ENCODE measurements at regions of chr9 and their contacts with region 1.

Region 1: DNA sequence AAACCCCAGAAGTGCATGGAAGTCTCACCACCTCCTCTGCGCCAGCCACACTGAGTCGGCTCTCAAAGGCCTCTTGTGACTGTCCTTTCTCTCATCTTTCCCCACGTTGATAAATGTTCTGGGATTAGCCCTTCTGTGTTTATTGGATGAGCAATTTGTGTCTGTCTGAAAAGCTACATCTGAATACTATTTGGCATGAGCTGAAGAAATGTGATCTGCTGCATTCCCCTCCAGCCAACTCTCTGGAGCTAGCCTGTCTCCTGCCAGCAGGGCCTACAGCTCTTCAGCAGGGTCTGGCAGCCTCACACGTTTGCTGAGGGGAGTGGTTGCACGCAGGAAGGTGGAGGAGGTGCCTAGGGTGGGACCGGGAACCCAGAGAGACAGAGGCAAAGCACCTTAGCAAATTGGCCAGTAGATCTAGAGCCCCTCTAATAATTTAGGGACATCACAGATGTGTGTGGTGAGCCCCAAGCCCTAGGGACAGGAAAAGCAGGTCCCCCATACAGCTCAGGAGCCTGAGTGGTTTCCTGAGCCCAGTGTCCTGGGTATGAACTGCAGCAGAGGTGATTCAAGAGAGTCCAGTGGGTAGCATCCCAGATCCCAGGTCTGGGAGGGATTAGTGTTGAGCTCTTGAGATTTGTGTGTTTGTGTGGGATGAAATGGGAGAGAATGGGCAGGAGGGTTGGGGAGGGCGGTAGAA is 20.5 kb upstream of the B4GALT1 start:
- DNase-seq: peak; percentile 79
- ATAC-seq: peak; percentile 93
- H3K4me3 ChIP-seq: no peak overlapping the region
- H3K27ac ChIP-seq: peak overlapping the region; percentile 25; the same call in 1 of the 2 replicates
- H3K4me1 ChIP-seq: peaks cover 19% of the 10 kb centered on the region
- H3K27me3 ChIP-seq: no peaks in the 10 kb centered on the region
- CTCF ChIP-seq: no peak
- POLR2A ChIP-seq: no peak
- RAD21 ChIP-seq: no peak

Region 2: DNA sequence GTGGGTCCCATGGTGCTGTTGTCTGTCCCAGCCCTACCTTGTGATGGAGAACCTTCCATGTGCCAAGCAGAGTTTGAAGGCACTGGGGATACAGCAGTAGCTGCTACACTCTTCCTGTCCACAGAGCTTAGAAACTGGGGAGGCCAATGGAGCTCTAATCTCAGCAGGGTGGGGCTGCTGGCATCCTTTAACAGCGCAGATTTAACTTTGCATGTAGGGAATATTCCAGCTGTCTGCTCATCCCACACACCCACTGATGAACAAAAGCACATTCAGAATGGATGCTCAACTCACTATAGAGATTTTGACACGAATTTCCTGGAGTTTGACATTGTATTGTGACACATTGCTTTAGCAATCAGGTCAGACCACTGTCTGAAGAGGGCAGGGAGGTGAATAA is 355.3 kb before region 1 on chr9:
- CTCF ChIA-PET with region 1: no interaction called
- POLR2A ChIA-PET with region 1: no interaction called
- dilution Hi-C with region 1: no loop called
- in situ Hi-C with region 1: no loop called
- intact Hi-C with region 1: no loop called
- DNase-seq: no peak
- ATAC-seq: no peak
- H3K4me3 ChIP-seq: no peak overlapping the region
- H3K27ac ChIP-seq: no peak overlapping the region
- H3K4me1 ChIP-seq: no peaks in the 10 kb centered on the region
- H3K27me3 ChIP-seq: no peaks in the 10 kb centered on the region; the same call in 1 of the 2 replicates
- CTCF ChIP-seq: no peak
- POLR2A ChIP-seq: no peak
- RAD21 ChIP-seq: no peak

Region 3: DNA sequence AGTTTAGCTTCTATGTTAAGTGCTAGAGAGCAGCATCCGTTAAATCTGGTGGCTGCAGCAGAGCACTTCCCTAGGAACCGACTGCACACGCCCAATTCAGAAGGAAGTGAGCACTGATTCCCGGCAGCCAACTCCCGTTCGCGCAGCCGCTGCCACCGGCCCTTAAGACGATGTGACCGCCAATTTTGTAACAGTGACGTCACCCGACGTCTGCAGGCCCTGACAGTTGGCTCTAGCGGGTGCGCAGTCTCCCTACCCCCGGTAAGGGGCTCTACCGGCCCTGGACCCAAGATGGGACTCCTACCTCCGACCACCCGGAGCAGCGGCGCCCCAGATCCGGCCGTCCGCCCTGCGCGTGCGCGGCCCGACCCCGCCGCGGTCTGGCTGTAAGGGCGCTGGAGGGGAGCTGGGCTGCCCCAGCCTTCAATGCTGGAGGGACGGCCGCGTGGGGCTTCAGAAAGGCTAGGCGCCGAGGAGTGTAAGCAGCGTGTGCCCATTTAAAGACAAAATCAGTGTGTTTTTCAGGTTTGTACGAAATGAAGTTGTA is 143.5 kb before region 1 on chr9:
- CTCF ChIA-PET with region 1: no interaction called
- POLR2A ChIA-PET with region 1: interaction called, 22 read pairs
- dilution Hi-C with region 1: no loop called
- in situ Hi-C with region 1: no loop called
- intact Hi-C with region 1: no loop called
- DNase-seq: peak; percentile 93
- ATAC-seq: peak; percentile 92
- H3K4me3 ChIP-seq: peak overlapping the region; percentile 89
- H3K27ac ChIP-seq: peak overlapping the region; percentile 85
- H3K4me1 ChIP-seq: no peaks in the 10 kb centered on the region
- H3K27me3 ChIP-seq: no peaks in the 10 kb centered on the region
- CTCF ChIP-seq: no peak
- POLR2A ChIP-seq: peak; percentile 38; the same call in 1 of the 2 replicates
- RAD21 ChIP-seq: no peak

Region 4: DNA sequence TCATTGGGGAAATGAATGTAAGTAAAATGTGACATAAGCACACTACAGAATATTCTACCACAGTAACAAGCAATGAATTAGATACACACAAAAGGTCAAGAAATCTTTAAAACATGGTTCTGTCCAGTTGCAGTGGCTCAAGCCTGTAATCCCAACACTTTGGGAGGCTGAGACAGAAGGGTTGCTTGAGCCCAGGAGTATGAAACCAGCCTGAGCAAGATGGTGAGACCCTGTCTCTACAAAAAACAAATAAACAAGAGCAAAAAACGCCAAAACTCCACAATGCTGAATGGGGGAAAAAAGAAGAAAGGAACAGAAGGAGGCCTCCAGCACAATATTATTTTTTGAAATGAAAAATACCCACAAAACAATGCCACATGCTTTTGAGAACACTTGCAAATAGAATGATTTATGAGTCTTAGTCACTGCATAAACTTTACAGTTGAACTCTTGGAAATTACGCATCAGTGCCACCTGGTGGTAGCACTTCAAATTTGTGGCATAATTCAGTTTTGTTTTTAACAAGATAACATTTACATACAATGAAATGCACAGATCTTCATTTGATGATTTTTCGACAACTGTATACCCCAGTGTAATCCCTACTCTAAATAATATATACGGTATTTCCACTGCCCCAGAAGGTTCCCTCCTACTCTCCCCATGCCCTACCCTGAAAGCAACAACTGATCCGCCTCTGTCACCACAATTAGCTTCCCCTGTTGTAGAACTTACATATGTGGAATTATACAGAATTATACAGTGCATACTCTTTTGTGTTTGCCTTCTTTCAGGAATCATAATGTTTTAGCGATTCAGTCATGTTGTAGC is 37.9 kb after region 1 on chr9:
- CTCF ChIA-PET with region 1: no interaction called
- POLR2A ChIA-PET with region 1: no interaction called
- dilution Hi-C with region 1: no loop called
- in situ Hi-C with region 1: no loop called
- intact Hi-C with region 1: loop called (anchors 5 kb)
- DNase-seq: peak; percentile 84
- ATAC-seq: peak; percentile 74
- H3K4me3 ChIP-seq: no peak overlapping the region
- H3K27ac ChIP-seq: no peak overlapping the region
- H3K4me1 ChIP-seq: peaks cover 7% of the 10 kb centered on the region
- H3K27me3 ChIP-seq: no peaks in the 10 kb centered on the region
- CTCF ChIP-seq: peak; percentile 89
- POLR2A ChIP-seq: no peak; the same call in 1 of the 2 replicates
- RAD21 ChIP-seq: peak; percentile 91

Measured in IMR-90 (cell line).